HepG2 (cell line): ENCODE measurements at regions of chr3 and their contacts with region 1.

Region 1: GRCh38 chr3:157572559-157573270 is 69.5 kb upstream of the VEPH1 start:
- DNase-seq: peak; percentile 34
- ATAC-seq: peak; percentile 80
- H3K4me3 ChIP-seq: no peak overlapping the region
- H3K27ac ChIP-seq: no peak overlapping the region
- H3K4me1 ChIP-seq: no peaks in the 10 kb centered on the region
- H3K27me3 ChIP-seq: no peaks in the 10 kb centered on the region
- CTCF ChIP-seq: peak; percentile 51
- EP300 ChIP-seq: no peak
- POLR2A ChIP-seq: no peak
- RAD21 ChIP-seq: no peak

Region 2: DNA sequence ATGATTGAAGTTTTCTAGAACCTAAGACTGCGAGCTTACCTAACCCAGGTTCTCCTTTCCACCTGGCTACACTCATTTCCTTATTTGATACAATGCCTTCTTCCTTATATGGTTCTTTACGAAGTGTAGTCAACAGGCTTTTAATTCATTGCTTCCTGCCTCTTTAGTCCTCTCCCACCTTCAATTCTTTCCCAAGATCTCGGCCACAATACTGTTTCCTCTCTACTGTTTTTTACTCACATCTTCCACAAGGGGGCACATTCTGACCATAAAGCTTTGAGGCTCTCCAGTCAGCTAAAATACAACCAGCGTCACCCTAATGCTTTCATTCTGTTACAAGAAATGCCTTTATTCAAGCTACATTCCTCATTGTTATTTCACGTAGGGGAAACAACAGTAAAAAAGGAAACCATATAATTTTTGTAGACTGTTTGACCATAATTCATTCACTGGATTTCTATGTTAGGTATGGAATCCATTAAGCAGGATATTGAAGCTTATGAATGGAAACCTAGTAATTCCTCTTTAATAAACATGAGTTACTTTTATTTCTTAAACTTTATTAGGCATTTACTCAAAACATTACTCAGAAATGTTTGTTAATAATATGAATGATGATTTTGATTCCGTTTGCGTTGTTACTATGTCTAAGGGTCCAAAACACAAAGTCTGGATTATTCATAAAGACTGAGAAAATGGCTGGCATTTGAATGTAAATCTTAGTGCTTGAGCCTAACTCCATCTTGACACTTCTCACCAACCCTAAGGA is 40.0 kb before region 1 on chr3:
- CTCF ChIA-PET with region 1: interaction called, 16 read pairs
- POLR2A ChIA-PET with region 1: no interaction called
- in situ Hi-C with region 1: no loop called
- intact Hi-C with region 1: loop called (anchors 1 kb)
- DNase-seq: peak; percentile 58
- ATAC-seq: peak; percentile 90
- H3K4me3 ChIP-seq: no peak overlapping the region
- H3K27ac ChIP-seq: no peak overlapping the region
- H3K4me1 ChIP-seq: no peaks in the 10 kb centered on the region
- H3K27me3 ChIP-seq: 0 out of 5 replicates have a peak, but pooled peaks cover 0 to 1% of the 10 kb centered on the region in 2 experiments
- CTCF ChIP-seq: peak; percentile 67
- EP300 ChIP-seq: no peak
- POLR2A ChIP-seq: no peak
- RAD21 ChIP-seq: no peak; the same call in 1 of the 2 replicates